ENCODE measurements at regions of chr10 and their contacts with region 1.

Region 1: DNA sequence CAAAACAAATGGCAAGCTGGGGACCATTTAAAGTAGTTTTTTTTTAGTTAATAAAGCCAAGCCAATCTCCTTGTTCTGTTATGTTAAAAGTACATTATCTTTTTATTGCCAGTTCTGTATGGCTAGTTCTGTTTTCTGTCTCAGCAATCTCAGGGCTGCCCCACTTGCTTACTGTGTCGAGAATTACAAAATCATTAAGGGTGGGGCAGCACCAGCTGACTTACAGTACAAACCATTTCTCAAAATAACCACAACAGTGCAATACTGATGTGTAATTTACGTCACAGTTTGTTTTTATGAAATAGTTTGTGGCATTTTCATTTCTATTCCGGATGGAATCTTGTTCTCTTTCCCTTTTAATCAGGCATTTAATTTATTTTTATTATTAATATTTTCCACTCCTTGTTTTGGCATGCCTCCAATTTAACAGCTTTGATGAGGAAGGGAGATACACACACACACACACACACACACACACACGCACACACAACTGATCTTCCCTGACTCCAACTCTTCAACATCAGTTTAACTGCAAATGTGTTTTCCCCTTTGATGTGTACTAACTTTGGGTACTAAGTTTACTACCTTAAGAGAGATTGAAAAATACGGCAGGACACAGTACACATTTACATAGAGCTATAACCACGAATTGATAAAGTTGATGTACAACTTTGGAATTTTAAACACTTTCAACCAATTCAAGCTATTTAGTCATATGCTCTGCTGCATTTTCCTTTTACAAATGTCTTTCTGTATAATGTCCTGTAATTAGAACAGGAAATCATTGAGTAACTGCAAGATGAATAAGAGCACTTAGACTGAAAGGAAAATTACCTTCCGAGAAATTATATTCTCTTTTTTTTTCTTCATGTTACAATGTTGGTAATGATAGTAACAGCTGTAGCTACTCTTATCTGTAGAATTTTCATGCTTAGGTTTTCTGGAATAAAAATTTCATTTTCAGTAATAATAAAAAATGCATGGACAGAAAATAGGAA is 91.5 kb downstream of the ARID5B start:
- DNase-seq: peak in 12 of 14 experiments; percentile 29 to 89 (median 53)
- ATAC-seq: peak; percentile 83
- H3K4me3 ChIP-seq: peak overlapping the region; percentile 15
- H3K4me3 Mint-ChIP-seq: peak overlapping the region; percentile 31
- H3K27ac ChIP-seq: peak overlapping the region; percentile 62 to 64
- H3K27ac Mint-ChIP-seq: peak overlapping the region; percentile 85
- H3K4me1 ChIP-seq: peaks cover 14% of the 10 kb centered on the region
- H3K4me1 Mint-ChIP-seq: peaks cover 73% of the 10 kb centered on the region
- H3K27me3 ChIP-seq: no peaks in the 10 kb centered on the region
- H3K27me3 Mint-ChIP-seq: no peaks in the 10 kb centered on the region
- CTCF ChIP-seq: no peak

Region 2: DNA sequence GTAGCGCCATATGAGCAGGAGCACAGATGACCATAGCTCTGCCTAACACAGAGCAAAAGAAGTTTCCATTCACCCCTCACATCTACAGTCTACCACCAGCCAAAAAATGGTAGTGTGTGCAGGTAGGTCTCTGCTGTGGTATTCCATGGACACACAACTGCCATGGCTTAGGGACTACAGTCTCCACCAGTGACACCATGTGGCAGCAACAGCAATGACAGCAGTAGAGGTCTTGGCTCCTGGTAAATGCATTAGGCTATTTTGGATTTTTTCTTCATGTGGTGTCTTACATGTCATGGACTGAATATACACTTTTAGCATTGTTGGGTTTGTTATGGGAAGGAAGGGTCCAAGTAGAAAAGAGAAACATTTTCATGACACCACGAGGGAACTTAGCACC is 400.4 kb before region 1 on chr10:
- CTCF ChIA-PET with region 1: no interaction called
- POLR2A ChIA-PET with region 1: no interaction called
- intact Hi-C with region 1: no loop called
- DNase-seq: peak in 1 of 14 experiments; percentile 1
- ATAC-seq: no peak
- H3K4me3 ChIP-seq: no peak overlapping the region
- H3K4me3 Mint-ChIP-seq: no peak overlapping the region
- H3K27ac ChIP-seq: no peak overlapping the region
- H3K27ac Mint-ChIP-seq: no peak overlapping the region
- H3K4me1 ChIP-seq: no peaks in the 10 kb centered on the region
- H3K4me1 Mint-ChIP-seq: no peaks in the 10 kb centered on the region
- H3K27me3 ChIP-seq: no peaks in the 10 kb centered on the region
- H3K27me3 Mint-ChIP-seq: no peaks in the 10 kb centered on the region
- CTCF ChIP-seq: no peak

Region 3: DNA sequence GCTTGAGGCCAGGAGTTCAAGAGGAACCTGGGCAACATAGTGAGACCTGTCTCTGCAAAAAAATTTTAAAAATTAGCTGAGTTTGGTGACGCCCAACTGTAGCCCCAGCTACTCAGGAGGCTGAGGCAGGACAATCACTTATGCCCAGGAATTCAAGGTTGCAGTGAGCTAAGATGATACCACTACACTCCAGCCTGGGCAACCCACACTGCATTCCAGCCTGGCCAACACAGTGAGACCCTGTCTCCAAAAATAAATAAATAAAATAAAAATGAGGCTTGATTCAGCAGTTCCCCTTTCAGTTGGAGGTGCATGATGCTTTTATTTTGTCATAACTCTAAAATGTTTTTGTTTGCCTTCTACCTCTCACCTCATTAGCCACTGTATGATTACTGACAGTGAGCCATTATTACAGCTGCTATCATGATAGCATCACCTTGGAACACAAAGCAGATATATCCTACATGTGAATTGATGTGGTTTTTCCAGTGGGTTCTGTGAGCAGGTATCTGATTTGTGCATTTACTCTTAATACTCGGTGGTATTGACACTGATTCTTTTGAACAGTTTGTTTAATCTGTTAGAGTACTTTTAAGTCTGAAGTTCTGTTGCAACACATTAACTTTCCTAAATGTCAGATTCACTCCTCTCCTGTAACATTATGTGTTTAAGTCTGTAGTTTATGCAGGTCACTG is 42.4 kb before region 1 on chr10:
- CTCF ChIA-PET with region 1: no interaction called
- POLR2A ChIA-PET with region 1: no interaction called
- intact Hi-C with region 1: loop called in 1 of 2 experiments (anchors 5 kb)
- DNase-seq: no peak
- ATAC-seq: no peak
- H3K4me3 ChIP-seq: no peak overlapping the region
- H3K4me3 Mint-ChIP-seq: no peak overlapping the region
- H3K27ac ChIP-seq: no peak overlapping the region
- H3K27ac Mint-ChIP-seq: no peak overlapping the region
- H3K4me1 ChIP-seq: peaks cover 4% of the 10 kb centered on the region
- H3K4me1 Mint-ChIP-seq: peaks cover 26% of the 10 kb centered on the region
- H3K27me3 ChIP-seq: no peaks in the 10 kb centered on the region
- H3K27me3 Mint-ChIP-seq: no peaks in the 10 kb centered on the region
- CTCF ChIP-seq: no peak

Region 4: DNA sequence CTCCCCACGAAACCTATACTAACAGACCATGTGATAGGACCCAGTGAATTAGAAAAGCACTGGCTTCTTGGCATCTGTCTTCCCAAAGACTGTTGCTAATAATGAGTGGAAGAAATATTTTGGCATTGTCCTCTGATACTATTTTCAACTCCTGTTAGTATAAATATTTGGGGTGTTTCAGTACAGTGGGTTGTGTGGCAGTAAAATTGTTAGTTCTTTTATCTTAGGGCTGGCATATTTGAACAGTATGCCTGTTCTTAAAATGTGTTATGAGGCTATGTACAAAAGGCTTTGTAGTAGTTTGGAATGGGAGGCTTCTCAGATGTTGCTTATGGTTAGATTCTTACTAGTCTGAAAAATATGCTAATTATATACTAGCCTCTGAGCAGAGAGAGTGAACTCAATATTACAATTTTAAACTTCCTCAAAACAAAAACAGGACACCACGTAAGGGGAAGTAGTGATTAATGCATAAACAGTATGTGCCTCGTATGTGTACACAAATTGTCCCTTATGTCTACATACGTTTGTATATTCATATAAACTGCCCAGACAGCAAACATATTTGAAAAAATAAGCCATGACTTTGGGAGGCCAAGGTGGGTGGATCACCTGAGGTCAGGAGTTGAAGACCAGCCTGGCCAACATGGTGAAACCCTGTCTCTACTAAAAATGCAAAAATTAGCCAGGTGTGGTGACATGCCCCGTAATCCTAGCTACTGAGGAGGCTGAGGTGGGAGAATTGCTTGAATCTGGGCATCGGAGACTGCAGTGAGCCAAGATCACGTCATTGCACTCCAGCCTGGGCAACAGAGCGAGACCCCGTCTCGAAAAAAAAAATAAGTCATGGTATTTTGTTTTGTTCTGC is 23.9 kb after region 1 on chr10:
- CTCF ChIA-PET with region 1: interaction called, 4 read pairs
- POLR2A ChIA-PET with region 1: interaction called, 3 read pairs
- intact Hi-C with region 1: loop called in 1 of 2 experiments (anchors 2 kb)
- DNase-seq: peak in 2 of 14 experiments; percentile 35 to 51
- ATAC-seq: peak; percentile 69
- H3K4me3 ChIP-seq: no peak overlapping the region
- H3K4me3 Mint-ChIP-seq: no peak overlapping the region
- H3K27ac ChIP-seq: no peak overlapping the region
- H3K27ac Mint-ChIP-seq: peak overlapping the region; percentile 27
- H3K4me1 ChIP-seq: peaks cover 11% of the 10 kb centered on the region
- H3K4me1 Mint-ChIP-seq: peaks cover 61% of the 10 kb centered on the region
- H3K27me3 ChIP-seq: no peaks in the 10 kb centered on the region
- H3K27me3 Mint-ChIP-seq: no peaks in the 10 kb centered on the region
- CTCF ChIP-seq: no peak

Region 5: GRCh38 chr10:62050893-62051433 is 58.0 kb after region 1 on chr10:
- CTCF ChIA-PET with region 1: no interaction called
- POLR2A ChIA-PET with region 1: interaction called, 15 read pairs
- intact Hi-C with region 1: loop called in 1 of 2 experiments (anchors 2 kb)
- DNase-seq: peak; percentile 54 to 93 (median 72)
- ATAC-seq: peak; percentile 81
- H3K4me3 ChIP-seq: peak overlapping the region; percentile 60
- H3K4me3 Mint-ChIP-seq: peak overlapping the region; percentile 83
- H3K27ac ChIP-seq: peak overlapping the region; percentile 83 to 87
- H3K27ac Mint-ChIP-seq: peak overlapping the region; percentile 91
- H3K4me1 ChIP-seq: peaks cover 64% of the 10 kb centered on the region
- H3K4me1 Mint-ChIP-seq: peaks cover 97% of the 10 kb centered on the region
- H3K27me3 ChIP-seq: no peaks in the 10 kb centered on the region
- H3K27me3 Mint-ChIP-seq: no peaks in the 10 kb centered on the region
- CTCF ChIP-seq: no peak

Region 6: DNA sequence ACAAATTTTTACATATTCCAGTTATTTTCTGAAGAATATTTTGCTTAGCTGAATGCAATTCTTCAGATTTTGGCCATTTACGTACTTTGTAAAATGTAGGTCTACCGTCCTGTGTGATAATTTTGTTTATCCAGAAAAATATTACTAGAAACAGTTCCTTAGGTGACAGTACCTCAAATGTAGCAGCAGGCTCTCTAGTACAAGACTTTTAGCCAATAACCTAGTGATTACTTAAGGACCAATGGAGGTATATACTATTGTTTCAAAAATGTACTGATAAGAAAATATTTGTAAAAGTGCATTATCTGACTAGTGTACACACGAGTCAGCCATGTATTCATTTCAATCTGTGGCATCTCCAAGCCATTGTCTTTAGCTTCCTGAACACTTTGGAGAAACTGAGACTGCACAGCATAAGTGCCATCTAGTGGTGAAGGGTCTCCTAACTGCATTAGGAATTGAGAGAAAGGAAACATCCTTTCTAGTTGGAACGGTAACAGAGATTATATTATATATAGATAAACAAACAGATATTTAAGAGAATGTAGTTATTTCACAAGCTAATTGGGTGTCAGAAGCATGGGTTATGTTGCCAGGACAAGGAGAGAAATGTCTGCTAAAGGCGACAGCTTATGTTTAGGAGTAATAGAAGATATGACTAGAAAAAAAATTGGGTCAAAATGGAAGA is 252.0 kb after region 1 on chr10:
- CTCF ChIA-PET with region 1: interaction called, 10 read pairs
- POLR2A ChIA-PET with region 1: no interaction called
- intact Hi-C with region 1: no loop called
- DNase-seq: peak in 11 of 14 experiments; percentile 15 to 82 (median 35)
- ATAC-seq: peak; percentile 92
- H3K4me3 ChIP-seq: no peak overlapping the region
- H3K4me3 Mint-ChIP-seq: peak overlapping the region; percentile 5
- H3K27ac ChIP-seq: no peak overlapping the region
- H3K27ac Mint-ChIP-seq: peak overlapping the region; percentile 18
- H3K4me1 ChIP-seq: peaks cover 4% of the 10 kb centered on the region
- H3K4me1 Mint-ChIP-seq: peaks cover 39% of the 10 kb centered on the region
- H3K27me3 ChIP-seq: no peaks in the 10 kb centered on the region
- H3K27me3 Mint-ChIP-seq: no peaks in the 10 kb centered on the region
- CTCF ChIP-seq: peak; percentile 92

Measured in CD4-positive, alpha-beta T cell (primary cell).